Activated naive CD4-positive, alpha-beta T cell treated with anti-CD3 and anti-CD28 coated beads for 36 hours (primary cell): ENCODE measurements at regions of chr12 and their contacts with region 1.

Region 1: DNA sequence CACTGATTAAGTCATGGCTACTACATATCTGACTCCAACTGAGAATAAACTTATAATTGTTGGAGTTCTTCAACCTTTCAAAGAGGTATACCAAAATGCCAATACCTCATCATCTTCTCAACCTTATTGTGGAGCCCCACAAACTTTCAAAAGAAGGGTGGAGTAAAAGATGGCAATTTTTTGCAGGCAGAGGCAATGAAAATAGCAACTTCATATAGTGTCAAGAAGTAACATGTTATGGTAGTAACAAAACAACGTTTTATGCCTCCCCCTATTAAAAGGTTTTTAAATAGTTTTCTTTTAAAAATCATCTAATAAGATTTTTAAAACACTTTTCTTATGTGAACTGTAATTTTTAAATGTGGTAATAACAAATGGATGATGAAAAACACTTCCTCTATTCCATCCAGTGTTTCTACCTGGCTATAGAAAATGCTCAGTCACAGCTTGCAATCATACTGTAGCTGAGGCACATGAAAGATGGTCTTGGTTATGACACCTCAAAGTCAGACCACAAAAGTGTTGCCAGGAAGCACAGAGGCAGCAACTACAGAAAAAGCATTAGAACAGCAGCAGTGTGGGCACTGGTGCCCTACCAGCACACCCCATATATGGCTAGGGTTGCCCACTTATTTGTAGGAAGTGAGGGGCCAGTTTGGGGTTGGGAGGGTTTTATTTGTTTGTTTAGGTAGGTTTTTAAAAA is 7.0 kb downstream of the PPP1R12A start:
- DNase-seq: peak; percentile 68
- H3K4me3 Mint-ChIP-seq: no peak overlapping the region
- H3K27ac Mint-ChIP-seq: peak overlapping the region; percentile 53
- H3K4me1 Mint-ChIP-seq: peaks cover 53% of the 10 kb centered on the region
- H3K27me3 Mint-ChIP-seq: no peaks in the 10 kb centered on the region

Region 2: DNA sequence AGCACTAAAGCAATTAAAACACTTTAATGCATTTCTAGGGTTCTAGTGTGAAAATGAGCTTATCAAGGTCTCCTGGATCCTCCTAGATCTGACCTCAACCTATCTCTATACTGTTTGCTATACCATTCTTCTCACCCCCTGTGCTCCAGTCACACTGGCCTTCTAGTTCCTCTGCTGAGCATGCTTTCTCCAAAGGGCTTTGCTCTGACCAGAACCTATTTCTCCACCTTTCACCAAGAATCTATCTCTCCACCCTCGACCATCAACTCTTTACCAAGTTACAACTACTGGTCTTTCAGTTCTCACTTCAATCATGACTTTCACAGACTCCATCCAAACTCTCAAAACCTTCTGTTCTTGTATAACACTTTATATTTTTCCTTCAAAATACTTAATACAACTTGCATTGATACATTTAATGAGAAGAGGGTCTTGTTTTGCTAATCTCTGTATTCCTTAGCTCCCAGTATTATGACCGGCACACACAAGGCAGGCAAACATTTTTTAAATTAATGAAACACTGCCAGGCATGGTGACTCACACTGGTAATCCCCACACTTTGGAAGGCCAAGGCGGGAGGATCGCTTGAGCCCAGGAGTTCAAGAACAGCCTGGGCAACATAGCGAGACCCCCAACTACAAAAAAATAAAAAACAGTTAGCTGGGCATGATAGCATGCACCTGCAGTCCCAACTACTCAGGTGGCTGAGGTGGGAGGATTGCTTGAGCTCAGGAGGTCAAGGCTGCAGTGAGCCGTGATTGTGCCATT is 15.8 kb before region 1 on chr12:
- CTCF ChIA-PET with region 1: no interaction called
- intact Hi-C with region 1: loop called (anchors 2 kb)
- DNase-seq: no peak
- H3K4me3 Mint-ChIP-seq: no peak overlapping the region
- H3K27ac Mint-ChIP-seq: no peak overlapping the region
- H3K4me1 Mint-ChIP-seq: peaks cover 63% of the 10 kb centered on the region
- H3K27me3 Mint-ChIP-seq: no peaks in the 10 kb centered on the region

Region 3: DNA sequence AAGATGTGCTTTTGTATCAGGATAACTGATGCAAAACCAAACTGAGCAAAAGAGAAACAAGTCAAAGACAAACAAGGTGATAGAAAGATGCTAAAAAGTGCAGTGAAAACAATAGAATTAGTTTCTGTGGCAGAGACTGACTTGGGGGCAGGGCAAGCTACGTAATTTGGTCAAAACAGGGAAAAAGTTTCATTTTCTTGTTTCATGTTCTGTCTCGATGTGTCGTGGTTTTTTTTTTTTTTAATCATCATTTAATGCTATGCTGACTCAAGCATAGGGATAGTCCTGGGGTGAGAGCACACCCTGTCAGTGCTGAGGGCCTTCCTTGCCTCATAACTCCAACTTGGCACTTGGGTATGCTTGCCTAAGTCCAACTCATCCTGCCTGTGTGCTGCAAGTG is 372.1 kb after region 1 on chr12:
- CTCF ChIA-PET with region 1: no interaction called
- intact Hi-C with region 1: no loop called
- DNase-seq: no peak
- H3K4me3 Mint-ChIP-seq: no peak overlapping the region
- H3K27ac Mint-ChIP-seq: no peak overlapping the region
- H3K4me1 Mint-ChIP-seq: no peaks in the 10 kb centered on the region
- H3K27me3 Mint-ChIP-seq: no peaks in the 10 kb centered on the region